Right ventricle myocardium inferior (tissue), 1 donor: ENCODE measurements at regions of chr20 and their contacts with region 1.

Region 1: DNA sequence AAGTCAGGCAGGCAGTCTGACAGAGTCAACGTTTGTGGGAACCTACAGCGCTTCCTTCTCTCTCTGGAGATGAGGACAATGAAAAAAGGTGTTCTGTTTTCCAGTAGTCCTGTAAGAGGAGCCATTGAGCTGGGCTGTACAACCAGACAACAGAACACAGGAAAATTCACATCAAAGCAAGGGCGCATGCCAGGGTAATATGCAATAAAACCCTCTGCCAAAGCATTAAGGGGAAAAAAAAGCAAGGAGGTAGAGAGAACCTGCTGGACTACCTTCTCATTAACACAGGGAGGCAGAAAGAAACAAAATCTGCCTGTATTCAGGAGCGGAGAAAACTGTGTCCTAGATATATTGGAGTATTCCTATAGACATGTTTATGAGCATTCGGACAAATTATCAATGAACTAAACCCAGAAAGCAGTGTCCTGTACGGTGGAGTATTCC is 1.3 kb downstream of the RNF24 start:
- DNase-seq: no peak
- ATAC-seq: peak; percentile 35

Region 2: DNA sequence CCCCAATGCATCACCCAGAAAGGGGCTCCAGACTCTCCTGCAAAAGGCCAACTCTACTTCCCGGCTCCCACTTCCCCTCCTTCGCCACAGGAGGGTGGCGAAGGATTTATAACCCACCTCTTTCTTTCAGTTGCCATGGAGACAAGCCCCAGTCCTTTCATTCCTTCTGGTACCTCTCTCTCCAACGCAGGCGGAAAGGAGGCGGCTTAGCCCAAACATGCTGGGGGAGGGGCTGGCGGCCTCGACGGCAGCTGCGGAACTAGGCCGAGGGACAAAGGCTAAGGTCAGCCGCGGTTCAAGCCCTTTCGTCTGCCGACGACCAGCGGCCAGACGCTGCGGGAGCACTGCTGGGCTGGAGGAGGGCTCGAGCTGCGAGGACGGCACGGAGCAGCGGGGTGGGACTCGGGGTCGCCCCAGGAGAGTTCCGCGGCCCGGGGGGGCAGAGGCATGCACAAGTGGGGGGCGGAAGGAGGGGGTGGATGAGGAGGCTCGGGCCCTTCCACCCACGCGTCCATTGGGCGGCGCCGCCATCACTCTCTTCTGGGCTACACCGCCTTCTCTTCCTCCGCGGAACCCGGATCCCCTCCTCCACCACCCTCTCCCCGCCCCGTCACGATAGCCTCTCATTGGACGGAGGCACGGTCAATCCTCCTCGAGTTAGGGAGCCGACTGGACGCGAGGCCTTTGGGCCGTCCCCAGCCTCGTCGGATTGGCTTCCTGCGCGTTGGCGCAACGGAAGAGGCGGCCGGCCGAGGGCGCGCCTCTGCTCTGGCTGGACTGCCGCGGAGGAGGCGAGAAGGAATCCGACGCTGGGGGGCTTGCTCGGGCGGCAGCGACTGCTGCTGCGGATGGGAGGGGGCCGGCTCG is 125.2 kb before region 1 on chr20 and contains the start of gene PANK2:
- intact Hi-C with region 1: loop called (anchors 2 kb)
- DNase-seq: peak; percentile 100
- ATAC-seq: peak; percentile 99
- total RNA-seq, gene PANK2: 16.6 TPM

Region 3: GRCh38 chr20:3932681-3933080 is 81.4 kb before region 1 on chr20:
- intact Hi-C with region 1: loop called (anchors 5 kb)
- DNase-seq: no peak
- ATAC-seq: no peak

Region 4: DNA sequence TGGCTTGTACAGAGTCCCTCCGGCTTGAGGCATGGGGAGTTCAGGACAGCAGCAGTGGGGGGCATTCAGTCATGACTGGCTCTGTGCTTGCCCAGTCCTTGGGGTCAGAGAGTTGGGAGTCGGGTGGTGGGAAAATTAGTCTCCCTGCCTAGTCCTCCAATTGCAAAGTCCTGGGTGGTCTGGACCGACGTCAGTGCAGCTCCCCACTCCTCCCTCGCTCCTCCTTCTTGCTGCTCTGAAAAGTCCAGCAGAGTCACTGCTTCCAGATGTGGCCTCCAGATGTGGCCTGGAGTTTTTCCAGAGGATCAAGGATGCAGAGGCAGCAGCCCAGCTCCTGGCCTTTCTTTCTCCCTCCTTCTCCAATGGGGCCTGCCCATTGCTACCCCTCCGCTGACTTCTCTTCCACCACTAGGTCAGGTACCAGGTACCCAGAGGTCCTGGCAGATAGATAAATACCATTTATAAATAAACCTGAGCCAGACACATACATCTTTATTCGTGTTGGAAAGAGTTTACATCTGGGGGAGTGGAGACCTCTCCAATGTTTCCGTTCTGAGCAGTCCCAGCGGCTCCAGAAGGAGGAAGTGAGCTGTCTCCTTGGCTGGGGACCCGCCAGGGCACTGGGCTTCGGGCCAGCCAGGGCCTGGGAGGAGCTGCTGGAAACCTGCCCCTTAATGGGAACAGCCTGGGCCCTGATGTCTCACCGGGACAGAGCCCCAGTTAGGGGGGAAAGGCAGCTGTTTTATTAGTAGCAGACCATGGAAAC is 50.3 kb after region 1 on chr20:
- intact Hi-C with region 1: loop called (anchors 5 kb)
- DNase-seq: peak; percentile 93
- ATAC-seq: peak; percentile 86

Region 5: DNA sequence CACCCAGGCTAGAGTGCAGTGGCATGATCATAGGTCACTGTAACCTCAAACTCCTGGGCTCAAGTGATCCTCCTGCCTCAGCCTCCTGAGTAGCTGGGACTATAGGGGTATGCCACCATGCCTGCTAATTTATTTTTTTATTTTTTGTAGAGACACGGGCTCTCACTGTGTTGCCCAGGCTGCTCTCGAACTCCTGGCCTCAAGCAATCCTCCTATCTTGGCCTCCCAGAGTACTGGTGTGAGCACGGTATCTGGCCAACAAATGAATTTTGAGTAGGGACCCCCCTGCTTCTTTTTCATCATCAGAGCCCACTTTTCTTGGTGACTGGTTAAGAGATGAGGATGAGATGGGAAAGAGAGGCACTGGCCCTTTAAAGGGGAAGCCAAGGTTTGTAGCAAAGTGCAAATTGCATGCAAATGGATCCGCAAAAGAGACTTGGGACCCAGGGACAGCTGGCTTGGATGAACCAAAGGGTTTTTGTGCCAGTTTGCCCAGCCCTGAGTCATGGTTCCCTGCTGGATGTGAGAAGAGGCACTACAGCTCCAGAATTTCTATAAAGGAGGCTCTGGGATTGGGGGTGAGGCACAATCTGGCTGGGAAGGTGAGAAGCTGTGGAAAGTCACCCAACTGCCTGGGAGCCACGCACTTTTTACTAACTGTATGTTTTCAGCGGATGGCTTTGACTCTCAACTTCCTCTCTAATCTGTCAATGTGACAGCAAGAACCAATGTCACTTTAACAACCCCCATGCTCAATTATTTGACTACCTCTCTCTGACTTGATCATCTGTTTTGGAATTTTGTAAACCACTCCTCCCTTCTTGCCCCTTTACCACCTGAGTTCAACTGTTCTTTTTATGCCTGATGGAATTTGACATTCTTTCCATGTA is 60.0 kb after region 1 on chr20:
- intact Hi-C with region 1: loop called (anchors 5 kb)
- DNase-seq: no peak
- ATAC-seq: no peak

Region 6: GRCh38 chr20:4084096-4084495 is 70.0 kb after region 1 on chr20:
- intact Hi-C with region 1: loop called (anchors 2 kb)
- DNase-seq: no peak
- ATAC-seq: no peak

Region 7: GRCh38 chr20:4320291-4320690 is 306.2 kb after region 1 on chr20:
- intact Hi-C with region 1: no loop called
- DNase-seq: no peak
- ATAC-seq: peak; percentile 48